IMR-90 (cell line): ENCODE measurements at regions of chr1 and their contacts with region 1.

Region 1: DNA sequence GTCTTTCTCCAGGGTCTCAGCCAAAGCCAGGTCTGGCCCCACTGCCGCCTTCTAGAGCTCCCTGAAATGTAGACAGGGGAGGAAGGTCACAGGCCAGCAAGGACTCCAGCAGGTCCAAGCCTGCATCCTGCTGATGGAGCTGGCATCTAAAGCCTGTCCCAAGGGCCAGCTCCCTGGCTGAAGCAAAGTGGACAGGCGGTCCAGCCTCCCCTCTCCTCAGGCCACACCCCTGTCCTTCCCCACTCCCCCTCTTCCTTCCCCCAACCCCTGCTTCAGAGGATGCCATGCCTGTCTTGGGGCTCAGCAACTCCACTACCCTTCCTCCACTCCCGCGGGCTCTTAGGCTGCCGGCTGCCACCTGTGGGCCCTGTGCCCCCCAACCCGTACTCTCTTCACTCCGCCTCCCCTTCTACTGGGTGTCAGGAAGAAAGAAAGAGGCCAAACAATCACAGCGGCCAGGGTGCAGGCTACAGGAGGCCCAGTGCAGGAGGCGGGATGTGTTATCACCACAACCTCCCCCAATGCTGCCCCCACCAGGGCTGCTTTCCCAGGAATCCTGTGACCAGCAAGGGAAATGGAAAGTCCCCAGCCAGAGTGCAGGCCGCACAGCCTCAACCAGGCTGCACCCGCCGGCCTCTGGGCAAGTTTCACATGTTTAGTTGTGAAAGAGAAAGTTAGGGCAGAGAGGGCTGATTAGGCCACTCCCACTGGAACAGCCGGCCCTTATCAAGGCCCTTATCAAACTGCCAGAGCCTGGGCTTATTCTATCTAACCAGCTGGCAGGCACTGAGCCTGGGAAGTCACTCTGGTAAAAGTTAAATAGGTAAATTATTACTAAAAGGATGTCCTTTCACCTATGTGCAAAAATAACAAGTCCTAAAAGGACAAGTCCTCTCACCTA is 34.1 kb downstream of the ACOT7 start:
- DNase-seq: peak; percentile 88
- ATAC-seq: peak; percentile 82
- H3K4me3 ChIP-seq: no peak overlapping the region
- H3K27ac ChIP-seq: peak overlapping the region; percentile 72
- H3K4me1 ChIP-seq: peaks cover 22% of the 10 kb centered on the region
- H3K27me3 ChIP-seq: no peaks in the 10 kb centered on the region
- CTCF ChIP-seq: 0 out of 2 replicates have a peak, but pooled peaks have one; percentile 15
- POLR2A ChIP-seq: no peak
- RAD21 ChIP-seq: no peak

Region 2: GRCh38 chr1:6401673-6402072 is 42.2 kb after region 1 on chr1:
- CTCF ChIA-PET with region 1: interaction called, 12 read pairs
- POLR2A ChIA-PET with region 1: no interaction called
- dilution Hi-C with region 1: no loop called
- in situ Hi-C with region 1: loop called (anchors 5 kb)
- intact Hi-C with region 1: loop called (anchors 1 kb)
- DNase-seq: no peak
- ATAC-seq: no peak
- H3K4me3 ChIP-seq: no peak overlapping the region
- H3K27ac ChIP-seq: no peak overlapping the region
- H3K4me1 ChIP-seq: no peaks in the 10 kb centered on the region
- H3K27me3 ChIP-seq: peaks cover 9% of the 10 kb centered on the region
- CTCF ChIP-seq: no peak
- POLR2A ChIP-seq: no peak
- RAD21 ChIP-seq: no peak

Region 3: GRCh38 chr1:6412895-6413294 is 53.4 kb after region 1 on chr1:
- CTCF ChIA-PET with region 1: interaction called, 3 read pairs
- POLR2A ChIA-PET with region 1: no interaction called
- dilution Hi-C with region 1: no loop called
- in situ Hi-C with region 1: no loop called
- intact Hi-C with region 1: loop called (anchors 2 kb)
- DNase-seq: no peak
- ATAC-seq: peak; percentile 36
- H3K4me3 ChIP-seq: no peak overlapping the region
- H3K27ac ChIP-seq: no peak overlapping the region
- H3K4me1 ChIP-seq: peaks cover 2% of the 10 kb centered on the region
- H3K27me3 ChIP-seq: peaks cover 34% of the 10 kb centered on the region
- CTCF ChIP-seq: no peak
- POLR2A ChIP-seq: no peak
- RAD21 ChIP-seq: no peak

Region 4: DNA sequence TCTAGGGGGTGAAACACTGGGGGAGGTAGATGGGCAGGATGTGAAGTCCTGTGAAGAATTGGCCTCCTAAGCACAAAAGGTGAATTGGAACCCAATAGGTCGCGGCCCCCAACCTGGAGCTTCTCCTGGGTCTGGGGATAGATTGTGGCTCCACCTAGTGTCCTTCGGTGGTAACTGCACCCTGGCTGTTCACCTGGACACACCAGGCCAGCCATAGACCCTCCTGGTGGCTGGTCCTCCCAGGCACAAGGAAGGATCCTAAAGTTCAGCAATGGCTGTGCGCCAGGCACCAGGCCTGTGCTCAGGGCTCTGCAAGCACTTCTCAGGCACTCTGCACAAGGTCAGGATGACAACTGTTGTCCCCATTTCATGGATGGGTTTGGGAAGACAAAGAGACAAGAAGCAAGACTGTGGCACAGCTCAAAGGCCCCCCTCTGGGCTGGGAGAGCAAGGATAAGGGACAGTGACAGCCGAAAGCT is 78.6 kb after region 1 on chr1:
- CTCF ChIA-PET with region 1: interaction called, 10 read pairs
- POLR2A ChIA-PET with region 1: no interaction called
- dilution Hi-C with region 1: no loop called
- in situ Hi-C with region 1: no loop called
- intact Hi-C with region 1: loop called (anchors 5 kb)
- DNase-seq: peak; percentile 33
- ATAC-seq: peak; percentile 80
- H3K4me3 ChIP-seq: no peak overlapping the region
- H3K27ac ChIP-seq: no peak overlapping the region
- H3K4me1 ChIP-seq: peaks cover 1% of the 10 kb centered on the region; the same call in 1 of the 2 replicates
- H3K27me3 ChIP-seq: peaks cover 42% of the 10 kb centered on the region
- CTCF ChIP-seq: peak; percentile 71
- POLR2A ChIP-seq: no peak
- RAD21 ChIP-seq: peak; percentile 59